ENCODE measurements at regions of chr5 and their contacts with region 1.

Region 1: GRCh38 chr5:134053840-134054338 is 49.1 kb upstream of the VDAC1 start:
- DNase-seq: peak; percentile 8
- ATAC-seq: no peak
- H3K4me3 ChIP-seq: no peak overlapping the region
- H3K27ac ChIP-seq: no peak overlapping the region
- H3K4me1 ChIP-seq: no peaks in the 10 kb centered on the region
- H3K27me3 ChIP-seq: peaks cover 25% of the 10 kb centered on the region
- CTCF ChIP-seq: no peak
- POLR2A ChIP-seq: no peak
- RAD21 ChIP-seq: no peak

Region 2: GRCh38 chr5:134758504-134759341 is 704.8 kb after region 1 on chr5 and contains the start of gene DDX46:
- CTCF ChIA-PET with region 1: no interaction called
- POLR2A ChIA-PET with region 1: interaction called, 20 read pairs
- dilution Hi-C with region 1: no loop called
- in situ Hi-C with region 1: no loop called
- intact Hi-C with region 1: no loop called
- DNase-seq: peak; percentile 88
- ATAC-seq: peak; percentile 100
- H3K4me3 ChIP-seq: peak within 1 kb of the TSS; percentile 96
- H3K27ac ChIP-seq: peak within 1 kb of the TSS; percentile 95
- H3K4me1 ChIP-seq: no peaks in the 10 kb centered on the region
- H3K27me3 ChIP-seq: no peaks in the 10 kb centered on the region
- CTCF ChIP-seq: peak; percentile 90
- POLR2A ChIP-seq: peak; percentile 84
- RAD21 ChIP-seq: no peak
- total RNA-seq, gene DDX46: 26.0 and 31.9 TPM in 2 replicates